Posterior vena cava (tissue), 2 donors: ENCODE measurements at regions of chr21 and their contacts with region 1.

Region 1: GRCh38 chr21:24561291-24561690 is 1046.0 kb downstream of the MRPL39 start:
- DNase-seq: no peak

Region 2: GRCh38 chr21:24545807-24546361 is 15.4 kb before region 1 on chr21:
- intact Hi-C with region 1: no loop called
- DNase-seq: no peak

Region 3: DNA sequence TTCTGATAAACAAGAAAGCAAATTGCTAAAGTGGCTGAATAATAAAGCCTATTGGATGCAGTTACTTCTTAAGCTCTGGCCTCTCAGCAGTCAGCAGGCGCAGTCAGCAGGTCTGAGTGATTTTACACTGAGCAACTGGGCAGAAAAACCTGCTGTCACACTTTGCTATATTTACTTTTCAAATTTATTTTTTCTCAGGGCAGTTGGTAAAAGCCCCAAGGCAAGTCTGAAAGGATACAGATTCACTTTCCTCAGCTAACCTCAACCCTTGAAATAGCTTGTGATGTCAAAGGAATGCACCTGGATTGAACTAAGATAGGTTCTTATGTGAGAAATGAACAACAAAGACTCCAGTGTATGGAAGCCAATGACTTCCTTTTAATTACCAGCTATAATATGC is 1139.5 kb after region 1 on chr21:
- intact Hi-C with region 1: loop called in 1 of 2 experiments (anchors 5 kb)
- DNase-seq: no peak